A673 (cell line): ENCODE measurements at regions of chr11 and their contacts with region 1.

Region 1: GRCh38 chr11:101436511-101437142 is 147.2 kb downstream of the TRPC6 start:
- DNase-seq: peak; percentile 49
- H3K4me3 ChIP-seq: no peak overlapping the region
- H3K27ac ChIP-seq: no peak overlapping the region
- H3K4me1 ChIP-seq: no peaks in the 10 kb centered on the region
- H3K27me3 ChIP-seq: no peaks in the 10 kb centered on the region
- CTCF ChIP-seq: peak; percentile 84

Region 2: DNA sequence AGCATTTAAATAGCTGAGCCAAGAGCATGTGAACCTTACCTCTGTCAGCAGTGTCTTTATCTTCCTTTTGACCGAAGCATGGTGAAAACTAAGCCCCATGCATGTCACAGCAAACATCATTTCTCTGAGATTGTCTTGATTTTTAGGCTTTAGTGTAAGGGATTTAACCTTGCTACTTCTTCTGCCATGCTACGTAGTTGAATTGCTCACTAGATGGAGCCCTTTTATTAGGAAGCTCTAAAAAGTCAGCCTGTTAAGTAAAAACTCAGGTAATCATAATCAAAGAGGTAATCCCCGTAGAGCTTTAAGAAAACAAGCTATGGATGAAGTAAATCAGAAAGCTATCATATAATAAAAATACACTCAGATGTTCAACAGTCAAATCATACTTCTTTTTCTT is 456.5 kb before region 1 on chr11:
- CTCF ChIA-PET with region 1: interaction called, 7 read pairs
- POLR2A ChIA-PET with region 1: no interaction called
- intact Hi-C with region 1: loop called (anchors 2 kb)
- DNase-seq: peak; percentile 34
- H3K4me3 ChIP-seq: no peak overlapping the region
- H3K27ac ChIP-seq: no peak overlapping the region
- H3K4me1 ChIP-seq: no peaks in the 10 kb centered on the region
- H3K27me3 ChIP-seq: no peaks in the 10 kb centered on the region
- CTCF ChIP-seq: peak; percentile 58

Region 3: GRCh38 chr11:101390539-101390938 is 46.1 kb before region 1 on chr11:
- CTCF ChIA-PET with region 1: no interaction called
- POLR2A ChIA-PET with region 1: no interaction called
- intact Hi-C with region 1: loop called (anchors 2 kb)
- DNase-seq: peak; percentile 7
- H3K4me3 ChIP-seq: no peak overlapping the region
- H3K27ac ChIP-seq: no peak overlapping the region
- H3K4me1 ChIP-seq: no peaks in the 10 kb centered on the region
- H3K27me3 ChIP-seq: no peaks in the 10 kb centered on the region
- CTCF ChIP-seq: peak; percentile 46